Calu3 (cell line): ENCODE measurements at regions of chr10 and their contacts with region 1.

Region 1: DNA sequence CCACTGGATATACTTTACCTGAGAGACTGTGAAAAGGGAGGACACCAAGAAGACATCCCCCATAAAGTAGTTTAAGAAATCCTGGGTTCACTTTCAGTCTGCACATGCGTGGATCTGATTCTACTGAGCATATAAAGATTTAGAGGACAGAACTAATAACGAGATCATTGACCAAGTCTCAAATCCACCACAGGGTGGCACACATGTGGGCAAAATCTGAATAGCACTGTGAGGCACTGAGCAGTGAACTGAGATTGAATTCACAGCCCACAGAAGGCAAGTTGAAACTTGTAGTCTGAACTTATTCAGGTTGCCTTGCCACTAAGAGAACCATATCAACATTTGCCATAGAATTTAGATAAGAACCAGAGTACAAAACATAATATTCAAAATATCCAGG is 818.6 kb downstream of the GRID1 start:
- DNase-seq: peak; percentile 59
- H3K4me3 Mint-ChIP-seq: no peak overlapping the region
- H3K27ac Mint-ChIP-seq: no peak overlapping the region
- H3K4me1 Mint-ChIP-seq: peaks cover 10% of the 10 kb centered on the region
- H3K27me3 Mint-ChIP-seq: no peaks in the 10 kb centered on the region
- CTCF ChIP-seq: no peak

Region 2: DNA sequence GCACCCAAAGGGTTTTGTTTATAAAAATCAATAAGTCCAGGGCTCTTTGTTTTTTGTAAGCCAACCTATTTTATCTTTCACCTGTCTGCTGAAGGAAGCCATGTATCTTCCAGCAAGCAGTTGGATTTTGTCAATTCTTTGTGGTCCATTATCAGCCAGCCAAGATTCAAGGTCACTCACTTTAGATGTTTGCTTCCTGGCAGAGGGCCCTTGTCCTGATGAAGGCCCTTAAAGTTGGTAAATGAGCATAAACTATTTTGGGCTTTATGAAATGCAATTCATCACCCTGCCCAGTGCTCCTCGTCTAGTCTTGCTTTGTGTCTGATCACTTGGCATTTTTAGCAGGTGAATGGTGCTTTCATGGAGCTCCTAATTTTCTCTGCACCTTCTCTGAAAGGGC is 185.6 kb before region 1 on chr10:
- CTCF ChIA-PET with region 1: no interaction called
- intact Hi-C with region 1: no loop called
- DNase-seq: no peak
- H3K4me3 Mint-ChIP-seq: no peak overlapping the region
- H3K27ac Mint-ChIP-seq: no peak overlapping the region
- H3K4me1 Mint-ChIP-seq: no peaks in the 10 kb centered on the region
- H3K27me3 Mint-ChIP-seq: no peaks in the 10 kb centered on the region
- CTCF ChIP-seq: no peak

Region 3: DNA sequence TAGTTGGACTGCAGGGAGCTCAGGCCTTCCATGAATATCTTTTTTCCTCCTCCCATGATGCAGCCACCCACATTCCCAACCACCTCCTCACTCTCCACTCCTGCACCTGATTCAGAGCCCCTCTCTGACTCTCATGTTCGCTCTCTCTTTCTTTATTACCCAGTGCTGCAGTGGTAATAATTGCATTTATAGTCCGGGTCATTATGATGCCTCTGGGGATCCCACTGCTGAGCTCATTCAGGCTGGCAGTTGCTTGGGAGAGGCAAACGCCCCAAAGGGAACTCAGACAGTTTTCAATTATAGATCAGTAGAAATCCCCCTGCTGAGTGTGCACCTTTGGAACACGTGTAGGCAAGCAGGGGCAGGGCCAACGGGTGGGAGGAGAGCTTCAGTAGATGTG is 134.5 kb before region 1 on chr10:
- CTCF ChIA-PET with region 1: no interaction called
- intact Hi-C with region 1: no loop called
- DNase-seq: no peak
- H3K4me3 Mint-ChIP-seq: no peak overlapping the region
- H3K27ac Mint-ChIP-seq: no peak overlapping the region
- H3K4me1 Mint-ChIP-seq: no peaks in the 10 kb centered on the region
- H3K27me3 Mint-ChIP-seq: peaks cover 8% of the 10 kb centered on the region
- CTCF ChIP-seq: no peak

Region 4: GRCh38 chr10:85641479-85642009 is 93.5 kb after region 1 on chr10:
- CTCF ChIA-PET with region 1: no interaction called
- intact Hi-C with region 1: loop called (anchors 2 kb)
- DNase-seq: peak; percentile 56
- H3K4me3 Mint-ChIP-seq: peak overlapping the region; percentile 15
- H3K27ac Mint-ChIP-seq: peak overlapping the region; percentile 95
- H3K4me1 Mint-ChIP-seq: peaks cover 56% of the 10 kb centered on the region
- H3K27me3 Mint-ChIP-seq: no peaks in the 10 kb centered on the region
- CTCF ChIP-seq: no peak

Region 5: DNA sequence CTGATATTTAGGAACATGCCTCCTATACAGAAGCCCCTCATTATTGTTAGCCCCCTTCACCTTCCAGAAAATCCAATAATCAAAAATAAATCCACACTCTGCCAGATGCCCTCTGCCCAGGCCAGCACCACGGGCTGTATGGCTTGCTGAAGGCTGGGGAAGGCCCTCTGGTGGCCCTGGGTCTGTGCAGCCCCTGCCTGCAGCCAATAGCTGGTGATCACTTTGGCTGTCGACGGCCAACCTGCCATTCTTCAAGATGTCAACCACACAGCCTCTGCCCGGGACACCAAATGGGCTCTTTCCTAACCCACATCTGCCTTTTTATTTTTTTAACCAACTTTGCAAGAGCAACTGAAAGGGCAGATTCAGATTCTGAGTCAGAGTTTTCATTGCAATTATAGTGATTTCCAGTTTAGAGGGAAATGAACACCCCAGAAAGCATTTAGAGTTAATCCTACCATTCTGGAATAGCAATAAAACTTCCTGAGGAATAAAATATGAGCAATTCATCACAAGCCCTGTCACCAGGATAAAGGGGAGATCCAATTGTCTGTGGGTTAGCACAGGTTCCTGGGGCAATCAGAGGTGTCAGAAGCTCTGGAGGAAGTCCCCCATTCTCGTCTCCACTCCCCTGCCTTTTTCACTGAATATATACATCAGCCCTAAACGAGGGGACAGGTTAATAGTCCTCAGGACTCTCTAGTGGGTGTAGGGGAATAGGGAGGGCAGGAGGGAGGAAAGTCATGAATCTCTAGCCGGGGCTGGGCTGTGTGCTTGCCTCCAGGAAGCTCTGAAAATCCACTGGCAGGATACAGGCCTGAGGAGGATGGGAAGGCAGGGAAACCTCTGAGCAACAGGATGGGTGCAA is 607.3 kb after region 1 on chr10:
- CTCF ChIA-PET with region 1: no interaction called
- intact Hi-C with region 1: no loop called
- DNase-seq: no peak
- H3K4me3 Mint-ChIP-seq: no peak overlapping the region
- H3K27ac Mint-ChIP-seq: no peak overlapping the region
- H3K4me1 Mint-ChIP-seq: no peaks in the 10 kb centered on the region
- H3K27me3 Mint-ChIP-seq: peaks cover 52% of the 10 kb centered on the region
- CTCF ChIP-seq: no peak

Region 6: GRCh38 chr10:86366033-86366901 is 818.2 kb after region 1 on chr10 and contains the start of gene GRID1:
- CTCF ChIA-PET with region 1: no interaction called
- intact Hi-C with region 1: loop called (anchors 10 kb)
- DNase-seq: peak; percentile 18
- H3K4me3 Mint-ChIP-seq: peak within 1 kb of the TSS; percentile 62
- H3K27ac Mint-ChIP-seq: no peak within 1 kb of the TSS
- H3K4me1 Mint-ChIP-seq: peaks cover 8% of the 10 kb centered on the region
- H3K27me3 Mint-ChIP-seq: peaks cover 90% of the 10 kb centered on the region
- CTCF ChIP-seq: no peak
- total RNA-seq, gene GRID1: 0.10 TPM in 1 of 2 replicates, not detected in the other